ENCODE measurements at regions of chr2 and their contacts with region 1.

Region 1: DNA sequence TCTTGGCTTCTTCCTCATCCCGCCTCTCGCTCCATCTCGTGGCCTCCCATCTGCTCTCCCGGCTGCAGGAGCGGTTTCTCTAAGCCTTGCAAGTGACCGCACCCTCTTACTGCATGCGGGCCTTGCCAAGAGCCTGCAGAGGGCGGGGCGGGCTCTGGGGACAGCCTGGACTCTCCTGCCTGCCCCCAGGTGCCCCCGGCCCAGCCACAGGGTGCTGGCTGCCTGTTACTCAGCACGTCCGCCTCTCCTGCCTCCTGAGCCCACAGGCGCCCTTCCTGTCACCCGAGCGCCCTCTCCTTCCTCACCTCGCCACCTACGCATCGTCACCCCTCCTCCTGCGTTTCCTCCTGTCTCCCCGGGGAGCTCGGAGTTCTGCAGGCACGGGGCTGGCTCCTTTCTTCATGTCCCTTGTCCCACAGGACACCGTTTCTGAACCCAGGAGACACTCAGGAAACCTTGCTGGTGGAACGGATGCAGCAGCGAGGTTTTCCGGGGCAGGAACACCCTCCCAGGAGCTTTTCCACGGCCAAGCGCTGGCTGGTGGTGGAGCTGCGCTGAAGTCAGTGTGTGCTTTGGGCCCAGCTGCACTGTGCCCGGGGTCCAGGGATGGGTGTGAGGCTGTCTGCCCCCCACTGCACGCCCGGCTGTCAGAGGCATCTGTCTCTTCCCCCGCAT is 28.5 kb downstream of the HPCAL1 start:
- DNase-seq: peak; percentile 90
- H3K4me3 Mint-ChIP-seq: peak overlapping the region; percentile 95
- H3K27ac Mint-ChIP-seq: peak overlapping the region; percentile 92
- H3K4me1 Mint-ChIP-seq: peaks cover 68% of the 10 kb centered on the region
- H3K27me3 Mint-ChIP-seq: no peaks in the 10 kb centered on the region

Region 2: GRCh38 chr2:8976442-8977259 is 1354.5 kb before region 1 on chr2:
- intact Hi-C with region 1: no loop called
- DNase-seq: no peak
- H3K4me3 Mint-ChIP-seq: no peak overlapping the region
- H3K27ac Mint-ChIP-seq: no peak overlapping the region
- H3K4me1 Mint-ChIP-seq: no peaks in the 10 kb centered on the region
- H3K27me3 Mint-ChIP-seq: peaks cover 2% of the 10 kb centered on the region

Region 3: GRCh38 chr2:10162586-10163497 is 168.3 kb before region 1 on chr2:
- intact Hi-C with region 1: no loop called
- DNase-seq: no peak
- H3K4me3 Mint-ChIP-seq: no peak overlapping the region
- H3K27ac Mint-ChIP-seq: no peak overlapping the region
- H3K4me1 Mint-ChIP-seq: peaks cover 21% of the 10 kb centered on the region
- H3K27me3 Mint-ChIP-seq: no peaks in the 10 kb centered on the region

Region 4: DNA sequence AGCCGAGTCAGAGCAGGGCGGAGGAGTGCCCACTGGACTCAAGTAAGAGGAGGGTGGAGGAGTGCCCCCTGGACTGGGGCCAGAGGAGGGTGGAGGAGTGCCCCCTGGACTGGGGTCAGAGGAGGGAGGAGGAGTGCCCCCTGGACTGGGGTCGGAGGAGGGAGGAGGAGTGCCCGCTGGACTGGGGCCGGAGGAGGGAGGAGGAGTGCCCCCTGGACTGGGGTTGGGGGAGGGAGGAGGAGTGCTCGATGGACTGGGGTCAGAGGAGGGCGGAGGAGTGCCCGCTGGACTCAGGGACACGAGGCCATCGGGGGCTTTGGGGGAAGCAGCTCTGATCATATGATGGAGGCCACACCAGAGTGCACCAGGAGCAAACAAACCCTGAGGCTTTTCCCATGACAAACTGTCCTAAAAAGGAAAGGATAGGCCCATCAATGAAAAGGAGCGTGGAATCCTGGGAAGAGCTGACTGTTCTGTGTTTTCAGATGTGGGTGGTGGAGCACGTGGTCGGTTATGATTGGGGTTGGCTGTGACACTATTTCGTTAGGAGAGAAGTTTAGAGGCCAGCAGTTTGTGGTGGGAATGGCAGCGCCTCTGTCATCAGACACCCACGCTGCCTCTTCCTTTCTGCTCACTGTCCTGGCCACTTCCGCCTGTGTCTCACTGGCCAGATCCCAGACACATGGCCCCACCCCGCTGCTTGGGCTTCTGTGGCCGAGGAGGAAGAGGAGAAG is 53.0 kb before region 1 on chr2:
- intact Hi-C with region 1: loop called (anchors 2 kb)
- DNase-seq: peak; percentile 63
- H3K4me3 Mint-ChIP-seq: no peak overlapping the region
- H3K27ac Mint-ChIP-seq: peak overlapping the region; percentile 7
- H3K4me1 Mint-ChIP-seq: peaks cover 13% of the 10 kb centered on the region
- H3K27me3 Mint-ChIP-seq: peaks cover 8% of the 10 kb centered on the region

Region 5: DNA sequence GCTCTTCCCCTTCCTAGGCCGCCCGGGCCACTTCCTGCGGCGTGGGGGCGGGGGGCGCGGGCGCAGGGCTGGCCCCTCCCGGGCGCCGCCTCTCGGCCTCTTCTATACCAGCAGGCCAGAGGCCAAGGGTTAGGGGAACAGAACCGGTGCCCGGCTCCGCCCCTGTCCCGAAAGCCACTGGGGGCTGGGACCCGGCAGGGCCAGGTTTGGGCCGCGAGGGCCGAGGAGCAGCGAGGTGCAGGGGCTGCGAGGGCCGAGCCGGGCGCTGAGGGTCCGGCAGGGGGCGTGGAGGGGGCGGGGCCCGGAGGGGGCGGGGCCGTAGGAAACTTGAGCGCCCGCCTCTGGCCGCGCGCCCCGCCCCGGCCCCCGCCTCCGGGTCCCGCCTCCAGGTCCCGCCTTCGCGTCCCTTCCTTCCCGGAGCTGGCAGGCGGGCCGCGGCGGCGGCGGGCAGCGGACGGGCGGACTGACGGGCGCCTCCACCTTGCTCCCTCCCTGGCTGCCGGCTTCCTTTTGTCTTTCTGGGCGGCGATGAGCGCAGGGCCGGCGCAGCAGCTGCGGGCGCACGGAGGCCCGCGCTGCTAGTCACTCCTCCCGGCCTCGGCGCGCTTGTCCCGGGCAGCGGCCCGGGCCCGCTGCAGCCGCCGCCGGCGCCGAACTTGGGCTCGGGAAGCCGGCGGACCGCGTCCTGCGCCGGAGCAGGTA is 28.5 kb before region 1 on chr2 and contains the start of gene HPCAL1:
- intact Hi-C with region 1: loop called (anchors 1 kb)
- DNase-seq: peak; percentile 96
- H3K4me3 Mint-ChIP-seq: peak within 1 kb of the TSS; percentile 99
- H3K27ac Mint-ChIP-seq: peak within 1 kb of the TSS; percentile 87
- H3K4me1 Mint-ChIP-seq: peaks cover 64% of the 10 kb centered on the region
- H3K27me3 Mint-ChIP-seq: no peaks in the 10 kb centered on the region
- total RNA-seq, gene HPCAL1: 77.1 and 82.8 TPM in 2 replicates

Region 6: GRCh38 chr2:10360851-10361588 is 29.9 kb after region 1 on chr2:
- intact Hi-C with region 1: no loop called
- DNase-seq: no peak
- H3K4me3 Mint-ChIP-seq: no peak overlapping the region
- H3K27ac Mint-ChIP-seq: peak overlapping the region; percentile 1
- H3K4me1 Mint-ChIP-seq: peaks cover 7% of the 10 kb centered on the region
- H3K27me3 Mint-ChIP-seq: no peaks in the 10 kb centered on the region

Region 7: GRCh38 chr2:10382354-10383061 is 51.3 kb after region 1 on chr2:
- intact Hi-C with region 1: loop called (anchors 5 kb)
- DNase-seq: peak; percentile 81
- H3K4me3 Mint-ChIP-seq: peak overlapping the region; percentile 57
- H3K27ac Mint-ChIP-seq: no peak overlapping the region
- H3K4me1 Mint-ChIP-seq: peaks cover 74% of the 10 kb centered on the region
- H3K27me3 Mint-ChIP-seq: no peaks in the 10 kb centered on the region

Region 8: GRCh38 chr2:10408649-10409579 is 77.8 kb after region 1 on chr2:
- intact Hi-C with region 1: loop called (anchors 1 kb)
- DNase-seq: peak; percentile 95
- H3K4me3 Mint-ChIP-seq: peak overlapping the region; percentile 84
- H3K27ac Mint-ChIP-seq: peak overlapping the region; percentile 96
- H3K4me1 Mint-ChIP-seq: peaks cover 46% of the 10 kb centered on the region
- H3K27me3 Mint-ChIP-seq: no peaks in the 10 kb centered on the region

Region 9: DNA sequence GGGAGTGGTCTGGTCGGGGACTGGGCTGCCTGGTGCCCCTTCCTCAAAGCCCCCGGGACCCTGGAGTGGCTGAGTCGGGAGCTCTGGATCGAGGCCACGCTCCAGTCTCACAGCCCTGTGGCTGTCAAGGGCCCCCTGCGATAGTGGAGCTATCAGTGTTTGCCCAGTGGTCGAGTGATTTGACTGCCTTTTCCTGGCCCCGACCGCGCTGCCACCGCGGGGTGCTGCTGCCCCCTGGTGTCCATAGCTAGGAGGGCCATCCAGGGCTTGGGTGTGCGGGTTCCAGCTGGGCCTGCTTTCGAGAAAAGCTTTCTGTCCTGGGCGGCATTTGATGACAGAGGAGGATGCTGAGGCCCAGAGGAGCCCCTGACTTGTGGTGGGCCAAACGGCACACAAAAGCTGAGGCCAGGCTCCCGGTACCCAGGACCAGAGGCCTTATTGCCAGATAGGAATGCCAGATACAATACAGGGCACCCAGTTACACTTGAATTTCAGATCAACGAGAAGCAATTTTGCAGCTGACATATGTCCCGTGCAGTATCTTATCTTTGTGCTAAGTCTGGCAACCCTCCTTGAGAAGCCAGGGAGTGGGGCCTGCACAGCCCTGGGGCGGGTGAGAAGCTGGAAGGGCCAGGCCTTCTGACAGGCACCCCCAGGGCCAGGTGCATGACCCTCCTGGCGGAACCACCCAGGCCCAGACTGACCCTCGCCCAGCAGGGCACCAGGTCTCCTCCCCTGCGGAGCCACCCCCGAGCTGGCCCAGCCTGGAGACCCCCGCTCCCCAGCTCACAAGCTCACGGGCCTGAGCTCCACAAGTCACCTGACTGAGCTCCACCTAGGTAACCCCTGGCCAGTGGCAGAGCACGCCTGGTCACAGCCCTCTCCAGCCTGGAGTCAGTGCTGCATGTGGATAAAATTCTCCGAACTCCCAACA is 104.0 kb after region 1 on chr2:
- intact Hi-C with region 1: no loop called
- DNase-seq: peak; percentile 94
- H3K4me3 Mint-ChIP-seq: peak overlapping the region; percentile 23
- H3K27ac Mint-ChIP-seq: no peak overlapping the region
- H3K4me1 Mint-ChIP-seq: peaks cover 12% of the 10 kb centered on the region
- H3K27me3 Mint-ChIP-seq: peaks cover 4% of the 10 kb centered on the region

Region 10: DNA sequence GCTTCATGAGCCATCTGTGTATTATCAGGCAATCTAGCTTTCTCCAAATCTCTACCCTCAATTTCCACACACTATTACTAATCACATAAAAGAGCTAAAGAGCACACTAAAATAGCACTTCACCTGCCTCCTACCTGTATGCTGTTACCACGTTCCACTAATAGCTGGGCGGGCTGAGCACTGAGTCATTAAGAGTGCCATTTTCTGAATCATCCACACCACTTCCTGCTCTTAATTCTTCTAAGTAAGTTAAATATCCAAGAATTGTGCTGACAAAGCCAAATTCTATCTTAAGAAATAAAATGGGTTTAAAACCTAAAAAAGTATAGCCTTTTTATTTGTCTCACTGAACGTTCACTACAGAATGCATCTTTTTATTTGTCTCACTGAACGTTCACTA is 322.9 kb after region 1 on chr2:
- intact Hi-C with region 1: loop called (anchors 1 kb)
- DNase-seq: peak; percentile 78
- H3K4me3 Mint-ChIP-seq: peak overlapping the region; percentile 72
- H3K27ac Mint-ChIP-seq: peak overlapping the region; percentile 81
- H3K4me1 Mint-ChIP-seq: peaks cover 47% of the 10 kb centered on the region
- H3K27me3 Mint-ChIP-seq: no peaks in the 10 kb centered on the region

Measured in activated CD4-positive, alpha-beta T cell treated with anti-CD3 and anti-CD28 coated beads, Interleukin-2, amount 10 ng/mL, durations not matched to agents 24 days and 14 days (primary cell).